Aorta (tissue), 5 donors: ENCODE measurements at regions of chr15 and their contacts with region 1.

Region 1: DNA sequence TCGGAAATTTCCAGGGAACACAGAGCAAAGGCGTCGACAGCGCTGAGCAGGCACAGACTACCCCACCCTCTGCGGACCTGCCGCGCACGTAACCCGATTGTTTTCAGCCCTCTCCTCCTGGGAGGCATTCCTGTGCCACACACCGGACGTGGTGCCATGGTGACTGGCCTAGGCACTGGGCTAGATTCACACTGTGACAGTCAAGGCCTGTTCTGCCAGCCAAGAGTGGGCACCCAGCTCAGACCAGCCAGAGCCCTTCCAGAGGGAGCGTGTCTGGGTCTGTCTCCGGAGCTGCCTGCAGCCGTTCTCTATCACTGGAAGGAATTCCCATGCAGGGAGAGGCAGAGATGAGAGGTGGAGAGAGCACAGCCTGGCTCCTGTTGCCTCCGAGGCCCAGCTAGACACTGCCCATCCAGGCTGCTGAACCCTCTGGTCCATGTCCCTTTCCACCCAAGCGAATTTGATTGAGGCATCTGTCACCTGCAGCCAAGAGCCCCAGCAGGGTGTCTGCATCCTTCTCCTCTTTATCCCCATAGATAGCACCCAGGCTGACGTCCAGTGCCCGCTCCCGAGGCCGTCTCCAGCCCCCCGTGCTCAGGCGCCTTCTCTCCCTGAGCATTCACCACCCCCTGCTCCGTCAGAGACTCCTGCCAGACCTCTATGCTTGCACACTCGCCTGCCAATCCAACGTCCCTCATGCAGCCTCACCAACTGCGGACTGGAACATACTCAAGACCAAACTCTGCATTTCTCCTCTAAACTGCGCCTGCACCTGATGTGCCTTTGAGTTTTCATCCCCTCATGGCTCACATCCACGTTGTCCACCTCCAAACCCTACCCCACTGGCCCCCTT is 267.5 kb downstream of the OCA2 start:
- DNase-seq: no peak
- ATAC-seq: no peak
- H3K4me3 ChIP-seq: no peak overlapping the region
- H3K27ac ChIP-seq: no peak overlapping the region
- H3K4me1 ChIP-seq: no peaks in the 10 kb centered on the region
- H3K27me3 ChIP-seq: no peaks in the 10 kb centered on the region

Region 2: GRCh38 chr15:27902680-27903385 is 71.2 kb after region 1 on chr15:
- intact Hi-C with region 1: loop called in 1 of 2 experiments (anchors 10 kb)
- DNase-seq: no peak
- ATAC-seq: peak; percentile 9
- H3K4me3 ChIP-seq: no peak overlapping the region
- H3K27ac ChIP-seq: no peak overlapping the region
- H3K4me1 ChIP-seq: no peaks in the 10 kb centered on the region
- H3K27me3 ChIP-seq: no peaks in the 10 kb centered on the region

Region 3: GRCh38 chr15:27956285-27956684 is 124.7 kb after region 1 on chr15:
- intact Hi-C with region 1: no loop called
- DNase-seq: no peak
- ATAC-seq: no peak
- H3K4me3 ChIP-seq: no peak overlapping the region
- H3K27ac ChIP-seq: no peak overlapping the region
- H3K4me1 ChIP-seq: no peaks in the 10 kb centered on the region
- H3K27me3 ChIP-seq: no peaks in the 10 kb centered on the region